Endothelial cell of umbilical vein (primary cell): ENCODE measurements at regions of chr7 and their contacts with region 1.

Region 1: GRCh38 chr7:114085592-114086501 is 167.0 kb upstream of the PPP1R3A start:
- DNase-seq: peak; percentile 65
- H3K4me3 ChIP-seq: peak overlapping the region; percentile 60 to 82 (median 81)
- H3K27ac ChIP-seq: no peak overlapping the region
- H3K4me1 ChIP-seq: peaks cover 33% of the 10 kb centered on the region
- H3K27me3 ChIP-seq: peaks cover 59 to 73% of the 10 kb centered on the region in 2 experiments
- CTCF ChIP-seq: no peak
- POLR2A ChIP-seq: no peak

Region 2: DNA sequence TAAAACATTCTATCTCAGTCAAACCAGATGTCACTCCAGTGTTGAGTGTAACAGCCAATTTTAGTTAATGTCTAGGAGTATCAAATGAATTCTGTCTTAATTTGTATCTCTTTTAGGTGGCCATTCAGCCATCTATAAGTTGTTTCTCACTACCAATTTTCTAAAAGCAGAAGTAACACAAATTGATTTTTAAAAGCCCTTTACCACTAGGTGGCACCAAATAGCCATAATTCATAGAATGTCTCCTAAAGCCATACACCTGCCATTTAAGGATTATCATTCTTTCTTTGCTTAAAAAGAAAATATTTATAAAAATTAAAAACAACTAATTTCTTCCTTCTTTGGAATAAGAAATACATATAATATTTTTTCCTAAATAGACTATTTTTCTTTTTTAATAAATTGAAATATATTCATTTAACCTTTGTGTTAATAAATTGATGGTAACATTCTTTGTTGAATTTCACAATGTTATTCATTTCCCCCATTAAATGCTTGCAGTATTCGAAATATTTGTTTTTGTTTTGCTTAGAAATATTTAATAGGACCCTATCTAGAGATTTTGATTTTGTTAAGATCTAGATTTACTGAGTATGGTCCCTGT is 59.3 kb before region 1 on chr7:
- CTCF ChIA-PET with region 1: interaction called, 13 read pairs
- POLR2A ChIA-PET with region 1: no interaction called
- dilution Hi-C with region 1: no loop called
- intact Hi-C with region 1: no loop called
- DNase-seq: peak; percentile 64
- H3K4me3 ChIP-seq: no peak overlapping the region
- H3K27ac ChIP-seq: no peak overlapping the region
- H3K4me1 ChIP-seq: no peaks in the 10 kb centered on the region
- H3K27me3 ChIP-seq: no peaks in the 10 kb centered on the region
- CTCF ChIP-seq: peak; percentile 24 to 36
- POLR2A ChIP-seq: no peak

Region 3: GRCh38 chr7:114426382-114427223 is 340.8 kb after region 1 on chr7:
- CTCF ChIA-PET with region 1: interaction called, 27 read pairs
- POLR2A ChIA-PET with region 1: no interaction called
- dilution Hi-C with region 1: no loop called
- intact Hi-C with region 1: no loop called
- DNase-seq: peak; percentile 49
- H3K4me3 ChIP-seq: no peak overlapping the region
- H3K27ac ChIP-seq: no peak overlapping the region
- H3K4me1 ChIP-seq: no peaks in the 10 kb centered on the region
- H3K27me3 ChIP-seq: no peaks in the 10 kb centered on the region
- CTCF ChIP-seq: peak in 1 of 2 donors; percentile 29
- POLR2A ChIP-seq: no peak

Region 4: DNA sequence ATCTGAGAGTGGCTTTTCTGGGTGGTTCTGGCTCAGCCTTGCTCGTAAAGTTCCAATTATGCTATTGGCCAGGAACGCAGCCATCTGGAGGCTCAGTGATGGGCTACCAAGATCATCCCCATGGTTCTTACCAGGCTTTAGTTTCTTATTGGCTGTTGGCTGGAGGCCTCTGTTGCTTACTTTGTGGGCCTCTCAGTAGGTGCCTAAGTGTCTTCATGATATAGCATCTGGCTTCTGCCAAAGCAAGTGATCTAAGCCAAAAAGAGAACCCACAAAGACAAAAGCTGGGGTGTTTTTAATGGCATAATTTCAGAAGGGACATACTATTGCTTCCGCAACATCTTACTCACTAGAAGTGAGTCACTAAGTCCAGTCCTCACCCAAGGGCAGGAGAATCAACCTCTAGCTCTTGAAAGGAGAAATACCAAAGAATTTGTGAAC is 704.0 kb after region 1 on chr7:
- CTCF ChIA-PET with region 1: no interaction called
- POLR2A ChIA-PET with region 1: no interaction called
- dilution Hi-C with region 1: no loop called
- intact Hi-C with region 1: loop called (anchors 5 kb)
- DNase-seq: peak; percentile 77
- H3K4me3 ChIP-seq: no peak overlapping the region
- H3K27ac ChIP-seq: peak overlapping the region; percentile 52
- H3K4me1 ChIP-seq: peaks cover 25% of the 10 kb centered on the region
- H3K27me3 ChIP-seq: peaks cover 2% of the 10 kb centered on the region in 2 experiments
- CTCF ChIP-seq: no peak
- POLR2A ChIP-seq: no peak

Region 5: GRCh38 chr7:115008465-115009114 is 922.7 kb after region 1 on chr7:
- CTCF ChIA-PET with region 1: no interaction called
- POLR2A ChIA-PET with region 1: no interaction called
- dilution Hi-C with region 1: no loop called
- intact Hi-C with region 1: no loop called
- DNase-seq: no peak
- H3K4me3 ChIP-seq: no peak overlapping the region
- H3K27ac ChIP-seq: no peak overlapping the region
- H3K4me1 ChIP-seq: peaks cover 5% of the 10 kb centered on the region
- H3K27me3 ChIP-seq: no peaks in the 10 kb centered on the region
- CTCF ChIP-seq: no peak
- POLR2A ChIP-seq: no peak

Region 6: DNA sequence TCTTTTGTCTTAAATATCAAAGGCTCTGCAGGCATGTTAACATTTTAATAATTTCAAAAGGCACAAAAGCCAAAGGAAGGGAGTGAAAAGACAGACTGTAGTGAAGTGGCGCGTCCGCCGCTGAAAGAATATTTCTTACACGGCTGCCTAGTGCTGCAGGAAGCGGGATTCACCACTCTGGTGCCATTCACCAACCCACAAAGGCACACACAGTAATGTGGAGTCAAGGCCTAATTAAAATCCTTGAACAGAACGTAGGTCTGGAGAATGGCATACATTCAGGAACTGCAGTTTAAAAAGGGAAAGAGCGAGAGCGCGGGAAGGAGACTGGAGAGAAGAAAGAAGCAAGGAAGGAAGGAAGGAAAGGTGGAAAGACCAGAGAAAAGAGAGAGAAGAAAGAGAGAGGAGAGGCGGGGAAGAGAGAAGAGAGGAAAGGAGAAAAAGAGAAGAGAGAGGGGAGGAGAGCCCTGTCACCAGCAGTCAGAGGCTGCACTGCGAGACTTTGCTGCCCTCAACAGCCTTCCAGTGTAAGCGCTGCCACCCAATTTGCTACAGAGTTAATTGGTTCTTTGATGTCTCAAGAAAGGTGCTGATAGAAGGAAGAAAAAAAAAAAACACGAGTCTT is 1390.0 kb after region 1 on chr7:
- CTCF ChIA-PET with region 1: interaction called, 3 read pairs
- POLR2A ChIA-PET with region 1: no interaction called
- dilution Hi-C with region 1: no loop called
- intact Hi-C with region 1: loop called (anchors 1 kb)
- DNase-seq: no peak
- H3K4me3 ChIP-seq: no peak overlapping the region
- H3K27ac ChIP-seq: no peak overlapping the region
- H3K4me1 ChIP-seq: peaks cover 6% of the 10 kb centered on the region
- H3K27me3 ChIP-seq: peaks cover 7 to 19% of the 10 kb centered on the region in 2 experiments
- CTCF ChIP-seq: no peak
- POLR2A ChIP-seq: no peak

Region 7: DNA sequence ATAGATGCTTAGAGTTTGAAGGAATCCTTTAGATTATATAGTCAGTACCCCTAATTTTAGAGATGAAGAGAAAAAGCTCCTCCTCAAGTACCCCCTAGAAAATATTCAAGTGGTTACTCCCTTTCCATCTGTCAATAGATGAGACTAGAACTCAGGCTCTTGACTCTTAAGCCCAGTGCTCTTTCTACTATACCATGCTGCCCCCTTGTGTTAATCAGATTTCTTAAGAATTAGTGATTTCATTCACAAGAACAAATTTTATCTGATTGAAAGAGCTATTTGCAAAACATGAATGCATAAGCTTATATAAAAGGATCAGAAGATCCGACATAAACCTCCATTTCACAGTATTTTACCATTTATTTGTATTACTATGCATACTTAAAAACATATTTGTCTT is 1765.4 kb after region 1 on chr7:
- CTCF ChIA-PET with region 1: interaction called, 95 read pairs
- POLR2A ChIA-PET with region 1: no interaction called
- dilution Hi-C with region 1: no loop called
- intact Hi-C with region 1: loop called (anchors 1 kb)
- DNase-seq: peak; percentile 66
- H3K4me3 ChIP-seq: no peak overlapping the region
- H3K27ac ChIP-seq: no peak overlapping the region
- H3K4me1 ChIP-seq: no peaks in the 10 kb centered on the region
- H3K27me3 ChIP-seq: peaks cover 0 to 2% of the 10 kb centered on the region in 2 experiments
- CTCF ChIP-seq: peak; percentile 9 to 12
- POLR2A ChIP-seq: no peak